ENCODE measurements at regions of chr15 and their contacts with region 1.

Region 1: DNA sequence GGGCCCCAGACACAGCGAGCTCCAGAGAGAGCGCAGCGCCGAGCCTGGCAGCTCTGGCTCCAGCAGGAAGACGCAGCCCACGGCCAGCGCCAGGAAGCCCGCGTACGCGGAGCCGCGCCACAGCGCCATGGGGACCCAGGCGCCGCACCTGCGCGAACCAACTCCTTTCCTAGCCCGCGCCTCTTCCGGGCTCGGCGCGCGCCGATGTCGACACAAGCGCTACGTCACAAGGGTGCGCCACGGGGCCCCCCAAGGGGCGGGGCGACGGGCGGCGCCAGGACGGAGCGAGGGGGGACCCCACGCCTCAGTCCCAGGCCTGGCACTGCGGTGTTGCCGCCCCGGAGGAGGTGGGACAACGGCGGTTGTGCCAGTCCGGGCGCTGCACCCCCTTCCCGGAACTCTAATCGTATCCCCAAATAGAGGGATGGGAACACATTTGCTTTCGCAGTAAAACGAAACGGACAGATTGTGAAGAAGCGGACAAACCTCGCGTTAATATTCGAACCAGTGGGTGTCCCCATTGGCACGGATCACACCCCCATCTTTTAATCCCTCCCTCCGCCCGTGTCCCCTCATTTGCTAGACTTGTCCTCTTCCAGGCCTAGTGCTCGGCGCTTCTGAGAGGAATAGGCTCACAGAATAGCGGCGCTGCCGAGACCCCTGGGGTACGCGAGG is at the start of gene ADPGK:
- H3K4me3 ChIP-seq: peak within 1 kb of the TSS; percentile 58
- H3K27ac ChIP-seq: peak within 1 kb of the TSS; percentile 67
- H3K4me1 ChIP-seq: no peaks in the 10 kb centered on the region
- CTCF ChIP-seq: peak; percentile 6; the same call in 1 of the 2 replicates

Region 2: DNA sequence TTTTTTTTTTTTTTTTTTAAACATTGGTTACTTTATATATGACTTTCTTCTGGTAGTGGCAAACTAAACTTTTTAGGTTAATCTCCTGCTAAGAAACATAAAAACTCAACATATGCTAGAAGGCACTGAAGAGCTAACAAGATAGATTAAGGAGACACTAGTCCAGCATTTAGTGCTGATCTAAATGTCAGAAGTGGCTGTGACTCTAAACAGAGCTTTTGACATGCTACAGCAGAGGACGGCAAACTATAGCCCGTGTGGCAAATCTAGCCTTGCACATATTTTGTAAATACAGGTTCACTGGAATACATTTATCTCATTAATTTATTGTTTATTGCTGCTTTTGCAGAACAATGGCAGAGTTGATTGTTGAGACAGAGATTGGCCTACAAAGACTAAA is 952.7 kb before region 1 on chr15:
- CTCF ChIA-PET with region 1: no interaction called
- POLR2A ChIA-PET with region 1: no interaction called
- H3K4me3 ChIP-seq: no peak overlapping the region
- H3K27ac ChIP-seq: no peak overlapping the region
- H3K4me1 ChIP-seq: peaks cover 9% of the 10 kb centered on the region
- CTCF ChIP-seq: no peak

Region 3: GRCh38 chr15:72796515-72797337 is 13.0 kb after region 1 on chr15:
- CTCF ChIA-PET with region 1: interaction called, 10 read pairs
- POLR2A ChIA-PET with region 1: no interaction called
- H3K4me3 ChIP-seq: peak overlapping the region; percentile 57
- H3K27ac ChIP-seq: peak overlapping the region; percentile 68; the same call in 1 of the 2 replicates
- H3K4me1 ChIP-seq: peaks cover 5% of the 10 kb centered on the region
- CTCF ChIP-seq: 0 out of 2 replicates have a peak, but pooled peaks have one; percentile 7